AG04449 (cell line): ENCODE measurements at regions of chr11 and their contacts with region 1.

Region 1: GRCh38 chr11:73625696-73626318 is 20.6 kb upstream of the PLEKHB1 start:
- DNase-seq: no peak
- H3K4me3 ChIP-seq: peak overlapping the region; percentile 36
- CTCF ChIP-seq: peak; percentile 92

Region 2: GRCh38 chr11:73404048-73404447 is 221.8 kb before region 1 on chr11:
- CTCF ChIA-PET with region 1: interaction called, 22 read pairs
- POLR2A ChIA-PET with region 1: no interaction called
- DNase-seq: no peak
- H3K4me3 ChIP-seq: no peak overlapping the region
- CTCF ChIP-seq: peak; percentile 80

Region 3: GRCh38 chr11:73429121-73429750 is 196.6 kb before region 1 on chr11:
- CTCF ChIA-PET with region 1: interaction called, 15 read pairs
- POLR2A ChIA-PET with region 1: no interaction called
- DNase-seq: no peak
- H3K4me3 ChIP-seq: no peak overlapping the region
- CTCF ChIP-seq: no peak

Region 4: GRCh38 chr11:73597956-73598718 is 27.7 kb before region 1 on chr11 and contains the start of gene FAM168A:
- CTCF ChIA-PET with region 1: interaction called, 51 read pairs
- POLR2A ChIA-PET with region 1: no interaction called
- DNase-seq: peak; percentile 84
- H3K4me3 ChIP-seq: peak within 1 kb of the TSS; percentile 82
- CTCF ChIP-seq: peak; percentile 26

Region 5: DNA sequence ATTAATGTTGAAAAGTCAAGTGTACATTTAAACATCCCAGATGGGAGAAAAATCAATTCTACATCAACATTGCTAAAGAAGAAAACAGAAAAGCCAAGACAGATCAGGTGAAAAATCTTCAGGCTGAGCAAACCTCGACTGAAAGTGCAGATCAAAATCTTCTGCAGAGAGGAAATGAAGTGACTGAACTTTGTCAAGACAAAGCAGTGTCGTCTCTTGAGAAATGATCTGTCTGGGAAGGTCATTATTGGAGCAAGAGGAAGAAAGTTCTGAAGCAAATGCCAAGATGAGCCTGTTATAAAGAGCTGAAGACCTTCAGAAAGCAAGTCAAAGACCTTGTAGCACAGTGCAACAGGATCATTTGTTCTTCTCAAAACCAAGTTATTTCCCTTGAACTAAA is 14.8 kb after region 1 on chr11:
- CTCF ChIA-PET with region 1: interaction called, 72 read pairs
- POLR2A ChIA-PET with region 1: no interaction called
- DNase-seq: no peak
- H3K4me3 ChIP-seq: no peak overlapping the region
- CTCF ChIP-seq: no peak

Region 6: DNA sequence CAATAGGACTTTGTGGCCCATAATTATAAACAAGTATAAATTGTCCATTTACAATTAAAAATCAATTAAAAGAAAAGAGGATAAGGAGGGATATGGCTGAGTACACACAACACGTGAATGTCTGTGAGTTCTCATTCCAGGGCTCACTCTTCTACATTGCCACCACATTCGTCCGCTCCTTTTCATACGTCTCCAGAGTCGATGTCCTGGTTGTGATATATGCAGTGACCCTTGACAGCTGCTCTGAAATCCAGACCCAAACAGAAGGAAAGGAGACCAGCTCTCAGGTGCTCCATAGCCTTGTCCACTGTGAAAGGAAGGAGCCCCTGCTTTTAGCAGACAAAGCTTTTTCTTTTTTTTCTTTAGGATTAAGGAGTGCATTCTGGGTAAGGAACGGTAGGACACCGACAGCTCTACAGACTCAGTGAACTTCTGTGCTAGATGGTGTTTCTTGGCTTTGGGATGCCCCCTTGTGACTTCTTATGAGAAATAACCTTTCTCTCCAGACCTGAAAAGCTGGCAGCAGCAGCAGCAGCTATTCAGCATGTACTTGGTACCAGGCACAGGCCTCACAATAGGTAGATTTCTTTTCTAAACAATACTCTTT is 305.3 kb after region 1 on chr11:
- CTCF ChIA-PET with region 1: interaction called, 29 read pairs
- POLR2A ChIA-PET with region 1: no interaction called
- DNase-seq: peak; percentile 29
- H3K4me3 ChIP-seq: no peak overlapping the region
- CTCF ChIP-seq: peak; percentile 49